ENCODE measurements at regions of chr21 and their contacts with region 1.

Region 1: GRCh38 chr21:44510508-44511210 is 29.3 kb downstream of the KRTAP10-1 start:
- DNase-seq: peak; percentile 66 to 77
- H3K4me3 ChIP-seq: no peak overlapping the region
- H3K27ac ChIP-seq: no peak overlapping the region
- H3K4me1 ChIP-seq: peaks cover 12 to 13% of the 10 kb centered on the region in 2 donors
- H3K27me3 ChIP-seq: no peaks in the 10 kb centered on the region
- CTCF ChIP-seq: peak; percentile 36 to 78 (median 67)
- POLR2A ChIP-seq: no peak

Region 2: DNA sequence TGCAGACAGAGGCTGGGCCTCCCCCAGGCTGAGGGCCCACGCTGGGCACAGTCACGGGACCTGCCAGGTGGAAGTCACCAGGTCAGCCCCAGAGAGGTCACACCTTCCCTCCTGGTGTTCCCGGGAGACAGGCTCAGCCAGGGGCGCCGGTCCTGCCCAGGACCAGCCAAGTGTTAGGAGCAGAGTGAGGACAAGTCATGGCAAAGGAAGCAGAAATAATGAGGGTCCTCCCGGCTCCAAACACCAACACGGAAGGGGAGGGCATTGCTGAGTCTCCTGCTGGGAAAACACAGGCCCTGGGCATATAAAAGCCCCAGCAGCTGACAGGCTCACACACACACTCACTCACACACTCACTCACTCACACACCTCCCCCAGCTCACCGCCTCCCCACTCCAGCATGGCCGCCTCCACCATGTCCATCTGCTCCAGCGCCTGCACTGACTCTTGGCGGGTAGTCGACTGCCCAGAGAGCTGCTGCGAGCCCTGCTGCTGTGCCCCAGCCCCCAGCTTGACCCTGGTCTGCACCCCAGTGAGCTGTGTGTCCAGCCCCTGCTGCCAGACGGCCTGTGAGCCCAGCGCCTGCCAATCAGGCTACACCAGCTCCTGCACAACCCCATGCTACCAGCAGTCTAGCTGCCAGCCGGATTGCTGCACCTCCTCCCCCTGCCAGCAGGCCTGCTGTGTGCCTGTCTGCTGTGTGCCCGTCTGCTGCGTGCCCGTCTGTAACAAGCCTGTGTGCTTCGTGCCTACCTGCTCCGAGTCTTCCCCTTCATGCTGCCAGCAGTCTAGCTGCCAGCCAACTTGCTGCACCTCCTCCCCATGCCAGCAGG is 126.6 kb after region 1 on chr21 and contains the start of gene KRTAP10-10:
- intact Hi-C with region 1: no loop called
- DNase-seq: no peak
- H3K4me3 ChIP-seq: no peak within 1 kb of the TSS
- H3K27ac ChIP-seq: no peak within 1 kb of the TSS
- H3K4me1 ChIP-seq: no peaks in the 10 kb centered on the region
- H3K27me3 ChIP-seq: no peaks in the 10 kb centered on the region
- CTCF ChIP-seq: no peak
- POLR2A ChIP-seq: no peak
- total RNA-seq, gene KRTAP10-10: not detected

Region 3: DNA sequence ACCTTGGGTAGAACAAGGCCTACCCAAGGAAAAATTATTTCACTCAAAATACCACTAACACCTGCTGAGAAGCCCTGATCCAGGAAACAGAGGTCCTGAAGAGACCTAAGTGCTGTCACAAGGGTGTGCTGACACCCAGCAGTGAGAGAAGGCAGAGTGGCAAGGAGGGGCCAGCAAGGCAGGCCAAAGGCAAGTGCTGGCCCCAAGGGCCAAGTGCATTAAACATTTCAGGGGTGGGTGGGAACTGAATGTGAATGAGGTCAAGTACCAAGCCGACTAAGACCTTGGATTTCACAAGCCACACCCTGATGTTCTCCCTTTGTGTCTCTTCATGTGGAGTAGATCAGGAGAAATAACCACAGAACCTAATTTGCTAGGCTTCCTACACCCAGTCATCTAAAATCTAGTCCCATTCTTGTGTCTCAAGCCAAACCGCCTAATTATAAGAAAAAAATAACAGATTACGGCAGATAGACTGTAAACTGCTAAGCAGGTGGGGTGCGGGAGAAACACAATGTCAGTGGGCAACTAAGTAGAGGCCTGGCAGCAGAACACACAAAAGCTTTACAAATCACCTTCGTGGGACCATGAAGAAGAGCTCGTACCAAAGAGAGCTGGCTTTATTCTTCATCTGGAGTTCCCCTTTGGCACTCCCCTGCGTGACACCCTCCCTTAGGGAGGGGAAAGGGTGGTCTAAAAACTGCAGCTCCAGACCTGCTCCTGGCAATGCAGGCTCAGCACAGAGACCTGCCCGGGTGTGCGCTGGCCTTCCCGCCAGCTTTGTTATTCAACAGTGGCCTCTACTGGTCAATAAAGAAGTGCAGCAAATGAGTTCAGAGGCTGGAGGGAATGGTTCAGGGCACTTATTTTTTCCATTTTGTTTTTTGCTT is 282.3 kb after region 1 on chr21:
- intact Hi-C with region 1: loop called (anchors 5 kb)
- DNase-seq: peak; percentile 56 to 59
- H3K4me3 ChIP-seq: no peak overlapping the region
- H3K27ac ChIP-seq: no peak overlapping the region
- H3K4me1 ChIP-seq: peaks cover 10 to 11% of the 10 kb centered on the region in 2 donors
- H3K27me3 ChIP-seq: no peaks in the 10 kb centered on the region
- CTCF ChIP-seq: peak; percentile 49 to 83 (median 79)
- POLR2A ChIP-seq: no peak